ENCODE measurements at regions of chr17 and their contacts with region 1.

Region 1: DNA sequence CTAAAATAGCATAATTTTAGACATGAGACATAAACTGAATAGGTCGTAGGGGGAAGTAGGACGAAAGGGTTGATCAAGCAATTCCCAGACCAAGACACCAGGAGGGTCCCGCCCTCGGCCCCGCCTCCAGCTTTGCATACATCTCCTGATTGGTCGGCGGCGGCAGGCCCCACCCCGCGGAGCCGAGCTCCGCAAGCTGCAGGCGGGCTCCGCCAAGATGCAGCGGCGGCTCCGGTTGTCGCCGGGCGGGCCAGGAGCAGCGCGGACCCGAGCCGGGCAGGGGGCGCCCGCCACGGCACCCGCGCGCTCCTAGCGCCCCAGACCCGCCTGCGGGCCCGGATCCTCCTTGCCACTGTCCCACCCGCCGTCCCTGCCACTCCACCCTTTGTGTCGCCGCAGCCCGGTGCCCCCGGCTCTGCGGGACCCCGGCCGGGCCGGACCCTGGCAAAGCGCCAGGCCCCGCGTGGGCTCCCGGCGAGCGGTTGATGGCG is at the start of gene CDR2L:
- DNase-seq: peak; percentile 95
- ATAC-seq: peak; percentile 99
- H3K4me3 ChIP-seq: peak within 1 kb of the TSS in 4 of 5 experiments; percentile 40 to 67 (median 53)
- H3K4me3 Mint-ChIP-seq: peak within 1 kb of the TSS; percentile 92
- H3K27ac ChIP-seq: no peak within 1 kb of the TSS
- H3K27ac Mint-ChIP-seq: peak within 1 kb of the TSS; percentile 53
- H3K4me1 ChIP-seq: peaks cover 16 to 20% of the 10 kb centered on the region in 2 donors
- H3K4me1 Mint-ChIP-seq: peaks cover 12% of the 10 kb centered on the region
- H3K27me3 ChIP-seq: peaks cover 0 to 41% (median 16%) of the 10 kb centered on the region in 4 experiments
- H3K27me3 Mint-ChIP-seq: peaks cover 16% of the 10 kb centered on the region
- CTCF ChIP-seq: no peak
- total RNA-seq, gene CDR2L: not detected in 2 replicates

Region 2: DNA sequence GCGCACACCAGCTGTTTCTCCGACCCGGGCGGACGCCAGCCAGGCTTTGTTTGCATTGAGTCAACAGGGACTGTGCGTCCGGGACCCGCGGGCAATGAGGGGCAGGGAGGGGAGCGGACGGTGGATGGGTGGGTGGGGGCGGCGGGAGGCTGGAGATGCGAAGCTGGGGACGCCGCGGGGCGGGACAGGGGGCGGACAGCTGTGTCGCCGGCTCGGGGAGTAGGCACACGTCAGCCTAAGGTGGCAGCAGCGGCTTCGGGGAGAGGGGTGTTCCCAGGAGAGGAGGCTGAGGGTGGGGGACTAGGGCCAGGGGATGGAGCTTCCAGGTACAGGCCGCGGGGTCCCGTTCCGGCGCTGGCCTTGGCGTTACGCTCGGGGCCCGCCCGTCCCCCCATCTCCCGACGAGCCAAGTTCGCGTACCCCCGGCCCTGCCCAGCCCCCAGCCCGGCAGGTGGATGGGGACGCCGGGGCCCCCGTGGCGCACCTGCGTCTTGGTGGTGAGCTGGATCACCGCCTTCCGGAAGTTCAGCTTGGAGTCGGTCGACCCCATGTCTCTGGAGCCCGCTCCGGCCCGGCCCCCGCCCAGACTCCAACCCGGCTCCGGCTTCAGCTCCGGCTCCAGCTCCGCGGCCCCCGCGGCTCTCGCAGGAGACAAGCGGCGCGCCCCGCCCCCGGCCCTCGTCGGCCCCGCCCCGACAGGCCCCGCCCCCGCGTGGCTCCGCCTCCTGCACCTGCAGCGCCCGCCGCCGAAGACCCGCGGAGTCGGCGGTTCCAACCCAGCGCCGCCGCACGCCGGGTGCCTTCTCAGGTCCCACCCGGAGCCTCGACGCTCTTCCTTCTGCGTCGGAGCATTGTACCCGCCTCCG is 15.1 kb before region 1 on chr17 and contains the start of gene HID1:
- CTCF ChIA-PET with region 1: interaction called, 3 read pairs
- POLR2A ChIA-PET with region 1: interaction called, 4 read pairs
- intact Hi-C with region 1: loop called (anchors 1 kb)
- DNase-seq: peak; percentile 84
- ATAC-seq: peak; percentile 93
- H3K4me3 ChIP-seq: peak within 1 kb of the TSS in 4 of 5 experiments; percentile 42 to 66 (median 57)
- H3K4me3 Mint-ChIP-seq: peak within 1 kb of the TSS; percentile 86
- H3K27ac ChIP-seq: no peak within 1 kb of the TSS
- H3K27ac Mint-ChIP-seq: peak within 1 kb of the TSS; percentile 46
- H3K4me1 ChIP-seq: peaks cover 13 to 16% of the 10 kb centered on the region in 2 donors
- H3K4me1 Mint-ChIP-seq: peaks cover 9% of the 10 kb centered on the region
- H3K27me3 ChIP-seq: peaks cover 0 to 48% (median 12%) of the 10 kb centered on the region in 4 experiments
- H3K27me3 Mint-ChIP-seq: peaks cover 24% of the 10 kb centered on the region
- CTCF ChIP-seq: no peak
- total RNA-seq, gene HID1: 1.7 and 3.9 TPM in 2 replicates

Region 3: GRCh38 chr17:75034236-75034908 is 46.9 kb after region 1 on chr17:
- CTCF ChIA-PET with region 1: no interaction called
- POLR2A ChIA-PET with region 1: no interaction called
- intact Hi-C with region 1: loop called (anchors 1 kb)
- DNase-seq: peak; percentile 87
- ATAC-seq: peak; percentile 70
- H3K4me3 ChIP-seq: peak overlapping the region; percentile 59 to 81 (median 71)
- H3K4me3 Mint-ChIP-seq: peak overlapping the region; percentile 99
- H3K27ac ChIP-seq: peak overlapping the region in 1 of 2 donors; percentile 69
- H3K27ac Mint-ChIP-seq: peak overlapping the region; percentile 97
- H3K4me1 ChIP-seq: peaks cover 15 to 34% of the 10 kb centered on the region in 2 donors
- H3K4me1 Mint-ChIP-seq: peaks cover 34% of the 10 kb centered on the region
- H3K27me3 ChIP-seq: no peaks in the 10 kb centered on the region
- H3K27me3 Mint-ChIP-seq: no peaks in the 10 kb centered on the region
- CTCF ChIP-seq: no peak